Activated CD4-positive, alpha-beta T cell treated with anti-CD3 and anti-CD28 coated beads, Interleukin-2, amount 10 ng/mL, durations not matched to agents 24 days and 14 days (primary cell): ENCODE measurements at regions of chr2 and their contacts with region 1.

Region 1: GRCh38 chr2:55232084-55232862 is at the starts of genes CLHC1 and RPS27A:
- DNase-seq: peak; percentile 98
- H3K4me3 Mint-ChIP-seq: peak within 1 kb of the TSS; percentile 91
- H3K27ac Mint-ChIP-seq: peak within 1 kb of the TSS; percentile 95
- H3K4me1 Mint-ChIP-seq: peaks cover 50% of the 10 kb centered on the region
- H3K27me3 Mint-ChIP-seq: no peaks in the 10 kb centered on the region
- total RNA-seq, gene CLHC1: 7.3 and 10.1 TPM in 2 replicates
- total RNA-seq, gene RPS27A: 1,064 and 1,070 TPM in 2 replicates

Region 2: DNA sequence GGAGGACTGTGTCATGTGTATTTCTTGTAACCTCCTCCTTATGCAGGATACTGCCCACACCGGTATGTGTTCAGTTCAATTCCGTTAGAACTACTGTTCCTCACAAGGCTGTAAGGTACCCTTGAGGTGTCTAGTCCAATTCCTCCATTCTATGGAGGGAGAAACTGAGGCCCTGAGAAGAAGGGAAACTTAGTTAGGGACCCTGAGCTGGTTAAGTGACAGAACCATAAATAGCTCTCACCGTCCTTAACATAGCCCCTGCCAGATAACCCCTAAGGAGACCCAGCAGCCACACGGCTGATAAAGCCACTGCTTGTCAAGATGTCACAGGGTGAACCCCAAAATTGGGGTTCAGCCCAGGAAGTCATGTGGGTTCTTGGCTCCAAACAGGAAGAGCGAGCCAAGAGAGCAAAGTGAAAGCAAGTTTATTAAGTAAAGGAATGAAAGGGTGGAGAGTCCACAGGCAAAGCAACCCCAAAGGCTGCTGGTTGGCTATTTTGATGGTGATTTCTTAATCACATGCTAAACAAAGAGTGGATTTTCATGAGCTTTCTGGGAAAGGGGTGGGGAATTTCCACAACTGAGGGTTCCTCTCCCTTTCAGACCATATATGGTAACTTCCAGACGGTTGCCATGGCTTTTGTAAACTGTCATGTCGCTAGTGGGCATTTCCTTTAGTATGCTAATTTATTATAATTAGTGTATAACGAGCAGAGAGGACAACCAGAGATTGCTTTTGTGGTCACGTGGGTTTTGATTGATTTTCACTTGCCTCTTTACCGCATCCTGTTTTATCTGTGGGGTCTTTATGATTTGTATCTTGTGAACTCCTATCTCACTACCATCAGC is 98.6 kb before region 1 on chr2:
- intact Hi-C with region 1: loop called (anchors 5 kb)
- DNase-seq: peak; percentile 90
- H3K4me3 Mint-ChIP-seq: peak overlapping the region; percentile 79
- H3K27ac Mint-ChIP-seq: peak overlapping the region; percentile 91
- H3K4me1 Mint-ChIP-seq: peaks cover 21% of the 10 kb centered on the region
- H3K27me3 Mint-ChIP-seq: no peaks in the 10 kb centered on the region

Region 3: GRCh38 chr2:55213822-55214221 is 18.5 kb before region 1 on chr2:
- intact Hi-C with region 1: no loop called
- DNase-seq: no peak
- H3K4me3 Mint-ChIP-seq: no peak overlapping the region
- H3K27ac Mint-ChIP-seq: no peak overlapping the region
- H3K4me1 Mint-ChIP-seq: peaks cover 4% of the 10 kb centered on the region
- H3K27me3 Mint-ChIP-seq: no peaks in the 10 kb centered on the region

Region 4: GRCh38 chr2:55252832-55253231 is 20.6 kb after region 1 on chr2:
- intact Hi-C with region 1: no loop called
- DNase-seq: no peak
- H3K4me3 Mint-ChIP-seq: no peak overlapping the region
- H3K27ac Mint-ChIP-seq: no peak overlapping the region
- H3K4me1 Mint-ChIP-seq: no peaks in the 10 kb centered on the region
- H3K27me3 Mint-ChIP-seq: no peaks in the 10 kb centered on the region

Region 5: GRCh38 chr2:55268907-55269644 is 36.8 kb after region 1 on chr2 and contains the start of gene MTIF2:
- intact Hi-C with region 1: loop called (anchors 1 kb)
- DNase-seq: peak; percentile 97
- H3K4me3 Mint-ChIP-seq: peak within 1 kb of the TSS; percentile 96
- H3K27ac Mint-ChIP-seq: peak within 1 kb of the TSS; percentile 95
- H3K4me1 Mint-ChIP-seq: peaks cover 7% of the 10 kb centered on the region
- H3K27me3 Mint-ChIP-seq: peaks cover 4% of the 10 kb centered on the region
- total RNA-seq, gene MTIF2: 45.7 and 47.1 TPM in 2 replicates

Region 6: DNA sequence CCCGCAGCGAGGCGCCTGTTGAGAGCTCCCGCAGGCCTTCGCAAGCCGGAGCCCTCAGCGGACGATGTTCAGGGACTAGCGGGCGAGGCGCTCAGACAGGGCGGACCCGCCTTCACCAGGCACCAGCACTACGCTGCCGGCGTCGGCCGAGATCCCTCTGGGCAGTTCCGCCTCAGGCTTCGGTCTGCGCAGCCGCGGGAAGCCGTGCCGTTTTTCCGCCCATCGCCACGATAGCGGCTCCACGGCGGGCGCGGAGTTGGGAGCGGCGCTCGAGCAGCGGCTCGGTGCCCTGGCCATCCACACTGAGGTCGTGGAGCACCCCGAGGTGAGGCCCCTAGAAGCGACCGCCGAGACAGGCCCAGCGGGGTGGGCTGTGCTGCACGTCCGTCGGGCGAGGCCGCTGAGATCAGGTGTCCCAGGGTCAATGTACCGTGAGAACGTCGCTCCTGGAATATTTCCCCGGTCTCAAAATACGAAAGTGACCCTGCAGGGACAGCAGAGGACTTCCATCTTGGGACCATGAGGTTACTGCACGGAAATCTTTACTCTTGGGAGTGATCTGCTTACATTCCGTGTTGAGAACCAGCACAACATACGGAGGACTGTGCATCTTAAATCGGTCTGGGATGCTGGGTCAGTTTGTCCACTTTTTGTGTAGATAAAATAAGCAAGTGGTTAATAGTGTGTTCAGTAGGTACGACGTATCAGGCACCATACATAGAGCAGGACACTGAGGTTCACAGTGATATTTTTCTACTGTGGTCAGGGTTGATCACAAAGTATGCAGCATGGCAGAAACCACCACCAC is 50.0 kb after region 1 on chr2:
- intact Hi-C with region 1: loop called (anchors 1 kb)
- DNase-seq: peak; percentile 97
- H3K4me3 Mint-ChIP-seq: peak overlapping the region; percentile 92
- H3K27ac Mint-ChIP-seq: peak overlapping the region; percentile 94
- H3K4me1 Mint-ChIP-seq: peaks cover 9% of the 10 kb centered on the region
- H3K27me3 Mint-ChIP-seq: no peaks in the 10 kb centered on the region

Region 7: GRCh38 chr2:55419679-55420438 is 187.6 kb after region 1 on chr2 and contains the start of gene CCDC88A:
- intact Hi-C with region 1: loop called (anchors 1 kb)
- DNase-seq: peak; percentile 95
- H3K4me3 Mint-ChIP-seq: peak within 1 kb of the TSS; percentile 90
- H3K27ac Mint-ChIP-seq: peak within 1 kb of the TSS; percentile 70
- H3K4me1 Mint-ChIP-seq: peaks cover 17% of the 10 kb centered on the region
- H3K27me3 Mint-ChIP-seq: peaks cover 37% of the 10 kb centered on the region
- total RNA-seq, gene CCDC88A: 9.5 and 9.8 TPM in 2 replicates

Region 8: GRCh38 chr2:55693181-55694134 is 461.2 kb after region 1 on chr2 and contains the start of gene PNPT1:
- intact Hi-C with region 1: loop called (anchors 2 kb)
- DNase-seq: peak; percentile 99
- H3K4me3 Mint-ChIP-seq: peak within 1 kb of the TSS; percentile 98
- H3K27ac Mint-ChIP-seq: peak within 1 kb of the TSS; percentile 96
- H3K4me1 Mint-ChIP-seq: peaks cover 29% of the 10 kb centered on the region
- H3K27me3 Mint-ChIP-seq: peaks cover 6% of the 10 kb centered on the region
- total RNA-seq, gene PNPT1: 68.1 and 77.9 TPM in 2 replicates

Region 9: GRCh38 chr2:56334622-56335021 is 1102.3 kb after region 1 on chr2:
- intact Hi-C with region 1: no loop called
- DNase-seq: no peak
- H3K4me3 Mint-ChIP-seq: no peak overlapping the region
- H3K27ac Mint-ChIP-seq: no peak overlapping the region
- H3K4me1 Mint-ChIP-seq: no peaks in the 10 kb centered on the region
- H3K27me3 Mint-ChIP-seq: no peaks in the 10 kb centered on the region